ENCODE measurements at regions of chr5 and their contacts with region 1.

Region 1: DNA sequence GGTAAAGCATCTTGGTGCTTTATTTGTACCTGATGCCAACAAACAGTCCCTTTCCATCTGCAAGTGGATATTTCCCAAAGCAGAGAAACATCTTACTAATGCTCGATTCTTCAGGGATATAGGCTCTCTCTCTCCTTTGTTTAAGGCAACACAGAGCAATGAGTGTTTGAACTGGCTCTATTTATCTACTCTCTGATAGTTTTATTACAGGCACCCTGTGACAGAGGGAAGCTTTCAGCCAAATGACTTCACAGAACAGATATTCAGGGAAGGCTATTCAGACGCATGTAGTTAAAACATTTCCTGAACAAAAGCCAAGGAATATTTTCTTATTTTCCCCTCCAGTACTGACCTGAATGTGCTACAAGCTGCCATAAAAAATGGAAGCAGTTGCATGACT is 141.8 kb downstream of the YIPF5 start:
- DNase-seq: peak; percentile 72
- H3K4me3 ChIP-seq: no peak overlapping the region
- H3K27ac ChIP-seq: no peak overlapping the region
- H3K4me1 ChIP-seq: no peaks in the 10 kb centered on the region
- H3K27me3 ChIP-seq: no peaks in the 10 kb centered on the region
- CTCF ChIP-seq: no peak
- POLR2A ChIP-seq: no peak

Region 2: DNA sequence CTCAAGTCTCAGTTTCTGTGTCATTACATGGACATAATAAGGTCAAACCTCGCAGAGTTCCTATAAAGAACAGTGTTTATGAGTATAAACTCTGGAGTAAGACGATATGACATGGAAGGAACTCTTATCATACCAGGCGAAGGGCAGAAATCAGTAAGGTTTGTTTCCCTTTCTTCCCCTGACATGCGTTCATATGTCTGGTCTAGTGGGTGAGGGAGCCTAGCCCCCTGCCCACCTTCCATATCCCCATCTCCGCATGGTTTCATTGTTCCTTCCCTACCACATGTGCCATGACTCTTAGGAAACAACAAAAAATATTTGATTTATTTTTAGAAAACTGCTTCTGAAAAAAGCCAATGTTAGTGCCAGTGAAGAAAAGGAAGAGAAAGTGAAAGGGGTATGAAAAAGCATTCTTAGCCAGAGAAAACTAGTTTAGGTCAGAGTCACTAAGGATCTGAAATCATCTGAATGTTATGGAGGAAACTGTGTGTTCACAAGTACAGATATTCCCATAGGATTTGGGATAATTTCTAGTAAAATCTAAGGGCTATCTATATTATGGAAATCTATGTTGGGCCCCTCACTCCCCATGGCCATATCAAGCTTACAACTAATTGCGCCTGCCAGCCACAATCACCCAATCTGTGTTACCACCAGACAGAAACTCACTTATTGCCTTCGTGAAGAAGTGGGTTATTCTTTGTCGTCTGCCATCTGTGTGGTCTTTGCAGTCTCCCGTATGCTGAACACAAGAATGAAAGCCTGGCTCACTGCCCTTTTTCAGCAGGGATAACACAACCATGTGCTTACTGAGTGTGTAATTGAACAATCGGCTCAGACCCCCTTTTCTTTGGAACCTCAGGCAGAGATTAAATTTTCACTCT is 236.5 kb before region 1 on chr5:
- CTCF ChIA-PET with region 1: no interaction called
- POLR2A ChIA-PET with region 1: no interaction called
- dilution Hi-C with region 1: no loop called
- intact Hi-C with region 1: no loop called
- DNase-seq: no peak
- H3K4me3 ChIP-seq: no peak overlapping the region
- H3K27ac ChIP-seq: no peak overlapping the region
- H3K4me1 ChIP-seq: no peaks in the 10 kb centered on the region
- H3K27me3 ChIP-seq: peaks cover 0 to 3% of the 10 kb centered on the region in 2 experiments
- CTCF ChIP-seq: no peak
- POLR2A ChIP-seq: no peak

Region 3: DNA sequence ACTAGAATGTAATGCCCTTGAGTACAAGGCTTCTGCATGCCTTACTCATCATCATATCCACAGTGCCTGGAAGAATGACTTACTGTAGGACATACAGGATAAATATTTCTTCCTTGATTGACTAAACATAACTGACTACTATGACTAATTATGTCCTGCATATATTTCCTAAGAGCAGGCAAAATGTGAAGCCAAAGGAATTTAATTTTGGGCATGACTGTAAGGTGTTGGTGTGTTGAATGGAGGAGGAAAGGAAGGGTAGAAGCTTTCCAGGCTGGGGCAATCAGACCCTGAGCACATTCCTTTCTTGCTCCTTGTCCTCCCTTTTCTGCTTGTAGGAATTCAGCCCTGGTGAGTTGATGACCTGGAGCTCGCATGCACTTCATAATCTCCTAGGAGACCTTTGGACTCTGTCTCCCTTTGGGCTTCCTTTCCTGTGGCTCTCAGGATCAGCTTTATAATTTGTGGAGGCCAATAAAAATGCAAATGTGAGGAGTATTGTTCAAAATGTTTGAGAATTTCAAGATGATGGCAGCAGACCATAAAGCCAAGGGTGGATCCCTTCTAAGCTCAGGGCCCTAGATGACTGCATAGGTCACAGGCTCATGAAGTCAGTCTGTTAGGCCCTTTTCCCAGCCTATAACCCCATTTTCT is 42.7 kb before region 1 on chr5:
- CTCF ChIA-PET with region 1: no interaction called
- POLR2A ChIA-PET with region 1: no interaction called
- dilution Hi-C with region 1: no loop called
- intact Hi-C with region 1: loop called (anchors 1 kb)
- DNase-seq: peak; percentile 58
- H3K4me3 ChIP-seq: no peak overlapping the region
- H3K27ac ChIP-seq: peak overlapping the region; percentile 44
- H3K4me1 ChIP-seq: peaks cover 24% of the 10 kb centered on the region
- H3K27me3 ChIP-seq: no peaks in the 10 kb centered on the region
- CTCF ChIP-seq: no peak
- POLR2A ChIP-seq: no peak

Region 4: GRCh38 chr5:144156767-144157171 is 128.1 kb after region 1 on chr5:
- CTCF ChIA-PET with region 1: no interaction called
- POLR2A ChIA-PET with region 1: no interaction called
- dilution Hi-C with region 1: no loop called
- intact Hi-C with region 1: no loop called
- DNase-seq: peak; percentile 42
- H3K4me3 ChIP-seq: no peak overlapping the region
- H3K27ac ChIP-seq: no peak overlapping the region
- H3K4me1 ChIP-seq: no peaks in the 10 kb centered on the region
- H3K27me3 ChIP-seq: no peaks in the 10 kb centered on the region
- CTCF ChIP-seq: no peak
- POLR2A ChIP-seq: no peak